Natural killer cell (primary cell): ENCODE measurements at regions of chr17 and their contacts with region 1.

Region 1: GRCh38 chr17:7823581-7824397 is 10.2 kb upstream of the KDM6B start:
- DNase-seq: no peak
- ATAC-seq: no peak
- H3K4me3 ChIP-seq: no peak overlapping the region
- H3K4me3 Mint-ChIP-seq: no peak overlapping the region
- H3K27ac ChIP-seq: no peak overlapping the region
- H3K27ac Mint-ChIP-seq: no peak overlapping the region
- H3K4me1 ChIP-seq: no peaks in the 10 kb centered on the region
- H3K4me1 Mint-ChIP-seq: no peaks in the 10 kb centered on the region
- H3K27me3 ChIP-seq: no peaks in the 10 kb centered on the region
- H3K27me3 Mint-ChIP-seq: peaks cover 8 to 19% of the 10 kb centered on the region in 2 donors
- CTCF ChIP-seq: no peak

Region 2: DNA sequence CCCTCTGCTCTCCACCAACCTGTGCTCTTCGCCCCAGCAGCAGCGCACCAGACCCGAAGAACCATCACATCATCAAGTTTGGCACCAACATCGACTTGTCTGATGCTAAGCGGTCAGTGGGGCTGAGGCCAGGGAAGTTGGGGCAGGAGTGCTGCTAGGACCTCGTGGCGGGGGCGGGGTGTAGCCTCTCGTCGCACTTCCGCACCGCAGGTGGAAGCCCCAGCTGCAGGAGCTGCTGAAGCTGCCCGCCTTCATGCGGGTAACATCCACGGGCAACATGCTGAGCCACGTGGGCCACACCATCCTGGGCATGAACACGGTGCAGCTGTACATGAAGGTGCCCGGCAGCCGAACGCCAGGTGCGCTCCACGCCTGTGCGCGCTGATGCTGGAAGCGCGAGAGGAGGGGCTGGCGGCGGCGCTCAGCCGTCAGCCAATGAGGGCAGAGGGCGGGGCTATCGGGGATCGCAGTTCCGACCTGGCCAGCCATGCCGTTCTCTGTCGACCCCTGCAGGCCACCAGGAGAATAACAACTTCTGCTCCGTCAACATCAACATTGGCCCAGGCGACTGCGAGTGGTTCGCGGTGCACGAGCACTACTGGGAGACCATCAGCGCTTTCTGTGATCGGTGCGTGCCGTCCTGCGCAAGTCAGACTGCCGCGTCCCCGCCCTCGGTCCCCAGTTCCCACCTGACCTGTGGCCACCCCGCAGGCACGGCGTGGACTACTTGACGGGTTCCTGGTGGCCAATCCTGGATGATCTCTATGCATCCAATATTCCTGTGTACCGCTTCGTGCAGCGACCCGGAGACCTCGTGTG is 27.9 kb after region 1 on chr17:
- intact Hi-C with region 1: loop called (anchors 1 kb)
- DNase-seq: peak; percentile 94 to 99
- ATAC-seq: peak; percentile 72 to 93 (median 87)
- H3K4me3 ChIP-seq: peak overlapping the region; percentile 34
- H3K4me3 Mint-ChIP-seq: peak overlapping the region; percentile 67
- H3K27ac ChIP-seq: peak overlapping the region; percentile 22
- H3K27ac Mint-ChIP-seq: peak overlapping the region; percentile 74 to 83
- H3K4me1 ChIP-seq: peaks cover 35% of the 10 kb centered on the region
- H3K4me1 Mint-ChIP-seq: peaks cover 12 to 24% of the 10 kb centered on the region in 2 donors
- H3K27me3 ChIP-seq: no peaks in the 10 kb centered on the region
- H3K27me3 Mint-ChIP-seq: no peaks in the 10 kb centered on the region
- CTCF ChIP-seq: peak; percentile 98

Region 3: GRCh38 chr17:8243827-8244226 is 420.0 kb after region 1 on chr17:
- intact Hi-C with region 1: no loop called
- DNase-seq: peak in 1 of 2 donors; percentile 53
- ATAC-seq: no peak
- H3K4me3 ChIP-seq: no peak overlapping the region
- H3K4me3 Mint-ChIP-seq: no peak overlapping the region
- H3K27ac ChIP-seq: no peak overlapping the region
- H3K27ac Mint-ChIP-seq: peak overlapping the region; percentile 92 to 97
- H3K4me1 ChIP-seq: peaks cover 36% of the 10 kb centered on the region
- H3K4me1 Mint-ChIP-seq: peaks cover 20 to 51% of the 10 kb centered on the region in 2 donors
- H3K27me3 ChIP-seq: no peaks in the 10 kb centered on the region
- H3K27me3 Mint-ChIP-seq: no peaks in the 10 kb centered on the region
- CTCF ChIP-seq: no peak